Activated CD8-positive, alpha-beta T cell treated with anti-CD3 and anti-CD28 coated beads for 36 hours (primary cell): ENCODE measurements at regions of chr6 and their contacts with region 1.

Region 1: GRCh38 chr6:50843842-50844241 is 25.2 kb downstream of the TFAP2B start:
- DNase-seq: no peak
- ATAC-seq: no peak
- H3K4me3 Mint-ChIP-seq: no peak overlapping the region
- H3K27ac Mint-ChIP-seq: no peak overlapping the region
- H3K4me1 Mint-ChIP-seq: no peaks in the 10 kb centered on the region
- H3K27me3 Mint-ChIP-seq: peaks cover 72% of the 10 kb centered on the region
- CTCF ChIP-seq: no peak

Region 2: DNA sequence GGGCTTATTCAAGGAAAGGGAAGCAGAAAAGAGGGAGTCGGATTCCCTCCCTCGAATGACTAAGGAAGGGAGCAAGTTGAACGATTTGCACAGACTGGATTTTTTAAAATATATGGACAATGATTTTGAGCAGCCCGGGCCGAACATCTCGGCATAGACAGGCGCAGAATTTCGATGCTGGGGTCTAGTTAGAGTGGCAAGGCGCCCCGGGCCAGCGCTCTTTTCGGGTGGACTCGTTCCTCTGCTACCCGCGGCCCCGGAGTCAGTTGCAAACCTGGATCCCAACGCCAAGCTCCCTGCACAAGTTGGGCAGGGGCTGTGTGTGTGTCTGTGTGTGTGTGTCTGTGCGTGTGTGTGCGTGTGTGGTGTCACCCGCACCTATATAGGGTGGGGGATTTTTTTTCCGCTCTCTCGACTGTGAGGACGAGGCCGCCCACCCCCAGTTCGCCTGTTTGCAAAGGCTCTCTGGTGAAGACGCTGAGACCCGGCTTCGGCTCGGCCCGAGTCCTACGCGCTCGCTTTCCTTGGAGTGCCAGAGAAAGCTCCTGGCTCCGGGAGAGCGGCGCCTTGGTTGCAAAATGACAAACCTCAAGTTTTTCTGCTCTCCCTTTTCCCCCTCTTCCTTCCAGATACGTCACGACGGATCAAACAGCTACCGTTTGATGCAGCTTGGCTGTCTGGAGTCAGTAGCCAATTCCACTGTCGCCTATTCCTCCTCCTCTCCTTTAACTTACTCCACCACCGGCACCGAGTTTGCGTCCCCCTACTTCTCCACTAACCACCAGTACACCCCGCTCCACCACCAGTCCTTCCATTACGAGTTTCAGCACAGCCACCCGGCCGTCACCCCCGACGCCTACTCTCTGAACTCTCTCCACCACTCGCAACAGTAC is 129.1 kb before region 1 on chr6:
- CTCF ChIA-PET with region 1: no interaction called
- POLR2A ChIA-PET with region 1: no interaction called
- intact Hi-C with region 1: loop called (anchors 10 kb)
- DNase-seq: no peak
- ATAC-seq: no peak
- H3K4me3 Mint-ChIP-seq: no peak overlapping the region
- H3K27ac Mint-ChIP-seq: no peak overlapping the region
- H3K4me1 Mint-ChIP-seq: no peaks in the 10 kb centered on the region
- H3K27me3 Mint-ChIP-seq: peaks cover 52% of the 10 kb centered on the region
- CTCF ChIP-seq: no peak